ENCODE measurements at regions of chr4 and their contacts with region 1.

Region 1: GRCh38 chr4:184745831-184746795 is 12.2 kb upstream of the CENPU start:
- DNase-seq: peak; percentile 80
- H3K4me3 Mint-ChIP-seq: no peak overlapping the region
- H3K27ac Mint-ChIP-seq: no peak overlapping the region
- H3K4me1 Mint-ChIP-seq: peaks cover 8% of the 10 kb centered on the region
- H3K27me3 Mint-ChIP-seq: no peaks in the 10 kb centered on the region

Region 2: GRCh38 chr4:184487513-184487912 is 258.6 kb before region 1 on chr4:
- CTCF ChIA-PET with region 1: no interaction called
- POLR2A ChIA-PET with region 1: no interaction called
- intact Hi-C with region 1: no loop called
- DNase-seq: no peak
- H3K4me3 Mint-ChIP-seq: no peak overlapping the region
- H3K27ac Mint-ChIP-seq: no peak overlapping the region
- H3K4me1 Mint-ChIP-seq: peaks cover 15% of the 10 kb centered on the region
- H3K27me3 Mint-ChIP-seq: peaks cover 3% of the 10 kb centered on the region

Region 3: DNA sequence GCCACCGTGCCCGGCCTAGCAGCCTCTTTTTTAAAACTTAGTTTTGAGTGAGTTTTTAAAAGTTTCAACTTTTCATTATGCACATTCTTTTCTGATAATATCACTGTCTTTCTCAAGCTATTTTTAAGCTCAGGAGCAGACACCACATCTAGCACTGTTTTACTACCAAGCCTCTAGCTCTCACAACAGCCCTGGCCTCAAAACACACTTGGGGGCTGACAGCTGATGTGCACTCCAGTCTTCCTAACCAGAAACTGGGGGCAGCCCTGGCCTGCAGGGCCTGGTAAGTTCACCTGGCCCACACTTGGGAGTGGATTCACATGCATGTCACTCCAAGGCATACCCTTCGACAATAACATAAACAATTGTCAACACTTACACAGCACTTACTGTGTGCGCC is 46.2 kb before region 1 on chr4:
- CTCF ChIA-PET with region 1: no interaction called
- POLR2A ChIA-PET with region 1: no interaction called
- intact Hi-C with region 1: no loop called
- DNase-seq: no peak
- H3K4me3 Mint-ChIP-seq: no peak overlapping the region
- H3K27ac Mint-ChIP-seq: no peak overlapping the region
- H3K4me1 Mint-ChIP-seq: peaks cover 2% of the 10 kb centered on the region
- H3K27me3 Mint-ChIP-seq: no peaks in the 10 kb centered on the region

Region 4: DNA sequence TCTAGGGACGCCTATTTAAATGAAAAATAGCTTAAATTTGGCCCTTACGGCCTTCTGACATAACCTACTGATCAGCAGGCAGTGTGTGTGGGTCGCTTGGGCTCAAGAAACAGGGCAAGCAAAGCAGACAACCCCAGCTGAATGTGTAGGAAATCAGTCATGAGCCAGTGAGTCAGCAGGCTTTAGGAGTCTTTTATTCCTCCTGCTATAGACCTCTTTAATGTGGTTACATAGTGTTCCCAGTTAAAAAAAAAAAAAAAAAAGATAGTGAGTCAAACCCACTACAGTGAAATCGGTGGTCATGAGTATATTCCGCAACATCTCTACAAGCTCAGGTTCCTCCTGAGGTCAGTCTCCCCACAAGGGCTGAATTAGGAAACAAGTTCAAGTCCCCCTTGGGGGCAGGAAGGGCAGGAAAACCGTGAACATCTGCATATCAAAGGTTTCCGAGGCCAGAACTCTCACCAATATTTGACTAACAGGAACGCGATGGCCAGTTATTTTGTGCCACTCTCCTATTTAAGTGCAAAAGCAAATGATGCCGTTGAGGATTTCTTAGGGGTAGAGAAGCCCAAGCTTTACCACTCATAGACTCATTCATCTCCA is 46.9 kb after region 1 on chr4:
- CTCF ChIA-PET with region 1: interaction called, 12 read pairs
- POLR2A ChIA-PET with region 1: no interaction called
- intact Hi-C with region 1: no loop called
- DNase-seq: peak; percentile 65
- H3K4me3 Mint-ChIP-seq: peak overlapping the region; percentile 2
- H3K27ac Mint-ChIP-seq: no peak overlapping the region
- H3K4me1 Mint-ChIP-seq: peaks cover 27% of the 10 kb centered on the region
- H3K27me3 Mint-ChIP-seq: no peaks in the 10 kb centered on the region

Region 5: GRCh38 chr4:184907216-184907615 is 161.1 kb after region 1 on chr4:
- CTCF ChIA-PET with region 1: interaction called, 5 read pairs
- POLR2A ChIA-PET with region 1: no interaction called
- intact Hi-C with region 1: loop called (anchors 1 kb)
- DNase-seq: peak; percentile 17
- H3K4me3 Mint-ChIP-seq: no peak overlapping the region
- H3K27ac Mint-ChIP-seq: no peak overlapping the region
- H3K4me1 Mint-ChIP-seq: peaks cover 6% of the 10 kb centered on the region
- H3K27me3 Mint-ChIP-seq: peaks cover 3% of the 10 kb centered on the region

Region 6: GRCh38 chr4:184983672-184984356 is 237.7 kb after region 1 on chr4:
- CTCF ChIA-PET with region 1: interaction called, 12 read pairs
- POLR2A ChIA-PET with region 1: no interaction called
- intact Hi-C with region 1: loop called (anchors 5 kb)
- DNase-seq: peak; percentile 79
- H3K4me3 Mint-ChIP-seq: no peak overlapping the region
- H3K27ac Mint-ChIP-seq: no peak overlapping the region
- H3K4me1 Mint-ChIP-seq: no peaks in the 10 kb centered on the region
- H3K27me3 Mint-ChIP-seq: no peaks in the 10 kb centered on the region

Region 7: DNA sequence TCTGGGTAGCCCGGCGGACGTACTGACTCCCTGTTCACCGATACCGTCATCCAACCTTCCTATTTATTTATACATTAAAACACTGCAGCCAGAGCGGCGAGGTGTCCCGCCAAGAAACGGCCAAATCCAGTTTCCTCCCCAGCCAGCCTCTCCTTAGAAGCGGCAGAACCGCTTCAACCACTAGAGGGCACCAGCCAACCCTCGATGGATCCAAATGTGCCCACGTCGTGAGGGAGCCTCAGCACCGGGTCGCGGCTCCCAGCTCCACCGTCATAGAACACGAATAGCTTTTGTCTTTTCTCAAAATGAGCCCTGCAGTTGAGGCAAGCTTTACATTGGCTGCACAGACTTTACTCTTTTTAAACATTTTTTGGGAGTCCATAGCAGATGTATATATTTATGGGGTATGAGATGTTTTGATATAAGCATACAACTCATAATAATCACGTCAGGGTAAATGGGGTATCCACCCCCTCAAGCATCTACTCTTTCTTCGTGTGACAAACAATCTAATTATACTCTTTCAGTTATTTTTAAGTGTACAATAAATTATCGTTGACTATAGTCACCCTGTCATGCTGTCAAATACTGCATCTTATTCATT is 259.2 kb after region 1 on chr4:
- CTCF ChIA-PET with region 1: interaction called, 8 read pairs
- POLR2A ChIA-PET with region 1: no interaction called
- intact Hi-C with region 1: loop called (anchors 5 kb)
- DNase-seq: peak; percentile 87
- H3K4me3 Mint-ChIP-seq: no peak overlapping the region
- H3K27ac Mint-ChIP-seq: no peak overlapping the region
- H3K4me1 Mint-ChIP-seq: peaks cover 7% of the 10 kb centered on the region
- H3K27me3 Mint-ChIP-seq: peaks cover 30% of the 10 kb centered on the region

Region 8: GRCh38 chr4:185096032-185096653 is 350.0 kb after region 1 on chr4:
- CTCF ChIA-PET with region 1: interaction called, 3 read pairs
- POLR2A ChIA-PET with region 1: no interaction called
- intact Hi-C with region 1: loop called (anchors 10 kb)
- DNase-seq: no peak
- H3K4me3 Mint-ChIP-seq: no peak overlapping the region
- H3K27ac Mint-ChIP-seq: no peak overlapping the region
- H3K4me1 Mint-ChIP-seq: no peaks in the 10 kb centered on the region
- H3K27me3 Mint-ChIP-seq: peaks cover 11% of the 10 kb centered on the region

Measured in activated CD4-positive, alpha-beta memory T cell treated with anti-CD3 and anti-CD28 coated beads for 36 hours (primary cell).